HepG2 (cell line): ENCODE measurements at regions of chr6 and their contacts with region 1.

Region 1: GRCh38 chr6:27312146-27312949 is at the start of gene POM121L2:
- DNase-seq: peak; percentile 71
- ATAC-seq: peak; percentile 87
- H3K4me3 ChIP-seq: peak within 1 kb of the TSS; percentile 34 to 70 (median 60); a peak in 5 of 6 replicates
- H3K27ac ChIP-seq: no peak within 1 kb of the TSS
- H3K4me1 ChIP-seq: peaks cover 12% of the 10 kb centered on the region
- H3K27me3 ChIP-seq: peaks cover 2 to 22% of the 10 kb centered on the region in 2 experiments; a peak in 2 of 5 replicates
- CTCF ChIP-seq: peak; percentile 97
- EP300 ChIP-seq: no peak
- POLR2A ChIP-seq: no peak
- RAD21 ChIP-seq: peak; percentile 89
- total RNA-seq, gene POM121L2: not detected in 2 replicates

Region 2: DNA sequence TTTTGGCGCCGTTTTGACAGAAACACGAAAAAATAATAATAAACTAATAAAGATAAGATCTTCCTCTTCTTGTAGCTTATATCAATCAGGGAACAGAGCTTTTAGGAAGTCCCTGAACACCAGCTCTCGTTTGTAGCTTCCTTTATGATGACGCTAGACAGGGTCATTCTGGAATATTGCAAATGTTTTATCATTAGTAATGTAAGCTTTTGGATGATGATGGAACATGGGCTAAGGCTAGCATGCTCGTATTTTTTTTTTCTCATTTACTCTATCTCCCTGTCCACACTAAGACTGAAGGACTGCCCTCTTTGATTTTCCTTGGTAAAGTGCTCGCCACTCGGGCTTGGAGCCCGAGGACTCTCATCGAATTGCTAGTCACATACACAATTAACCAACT is 21.8 kb after region 1 on chr6:
- CTCF ChIA-PET with region 1: no interaction called
- POLR2A ChIA-PET with region 1: no interaction called
- in situ Hi-C with region 1: no loop called
- intact Hi-C with region 1: no loop called
- DNase-seq: no peak
- ATAC-seq: no peak
- H3K4me3 ChIP-seq: peak overlapping the region; percentile 65 to 78 (median 77); a peak in 5 of 6 replicates
- H3K27ac ChIP-seq: no peak overlapping the region
- H3K4me1 ChIP-seq: peaks cover 47% of the 10 kb centered on the region
- H3K27me3 ChIP-seq: 0 out of 5 replicates have a peak, but pooled peaks cover 0 to 5% of the 10 kb centered on the region in 2 experiments
- CTCF ChIP-seq: no peak
- EP300 ChIP-seq: no peak
- POLR2A ChIP-seq: no peak
- RAD21 ChIP-seq: no peak

Region 3: DNA sequence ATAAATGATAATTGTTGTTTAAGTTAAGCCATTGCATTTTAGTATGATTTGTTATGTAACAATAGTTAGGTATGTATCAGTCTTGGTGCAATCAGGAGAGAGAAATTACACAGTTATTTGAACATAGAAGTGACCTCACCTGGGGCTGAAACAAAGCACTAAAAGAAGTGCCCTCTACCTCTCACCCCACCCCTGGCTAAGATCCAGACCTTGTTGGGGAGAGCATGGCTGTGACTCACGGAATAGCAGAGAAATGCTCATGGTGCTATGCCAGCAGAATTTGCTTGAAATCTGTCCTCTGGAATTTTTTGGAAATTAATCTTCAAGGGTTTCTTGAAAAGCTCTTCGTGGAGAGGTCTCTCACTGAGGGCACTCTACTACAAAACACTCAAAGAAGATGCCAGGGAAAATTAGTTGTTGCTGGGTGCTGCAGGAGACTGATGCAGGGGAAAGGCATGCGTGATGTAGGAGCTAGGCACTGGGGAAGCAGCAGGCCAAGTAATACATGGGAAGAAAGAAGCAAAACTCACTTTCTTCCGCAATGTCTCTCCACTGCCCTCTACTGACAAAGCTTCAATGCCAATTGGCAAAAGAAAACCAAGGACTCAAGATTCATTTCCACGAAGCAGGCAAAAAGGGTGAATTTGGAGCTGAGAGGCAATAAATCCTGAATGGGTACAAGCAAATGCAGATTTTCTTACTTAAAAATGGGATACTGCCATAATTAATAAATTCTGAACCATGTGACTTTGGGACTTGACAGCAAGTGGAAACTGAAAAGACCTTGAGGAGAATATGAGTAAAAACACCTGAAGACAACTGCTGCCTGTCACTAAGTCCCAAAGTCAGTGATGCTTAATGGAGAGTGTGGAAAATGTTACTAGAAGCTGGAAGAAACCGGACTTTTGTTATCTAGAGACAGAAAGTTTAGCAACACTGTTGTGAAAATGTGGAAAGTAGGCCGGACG is 296.9 kb after region 1 on chr6:
- CTCF ChIA-PET with region 1: interaction called, 5 read pairs
- POLR2A ChIA-PET with region 1: no interaction called
- in situ Hi-C with region 1: no loop called
- intact Hi-C with region 1: loop called (anchors 1 kb)
- DNase-seq: peak; percentile 61
- ATAC-seq: peak; percentile 31; the same call in 2 of the 3 replicates
- H3K4me3 ChIP-seq: no peak overlapping the region
- H3K27ac ChIP-seq: no peak overlapping the region
- H3K4me1 ChIP-seq: peaks cover 31% of the 10 kb centered on the region
- H3K27me3 ChIP-seq: no peaks in the 10 kb centered on the region
- CTCF ChIP-seq: peak; percentile 85
- EP300 ChIP-seq: no peak
- POLR2A ChIP-seq: no peak
- RAD21 ChIP-seq: peak; percentile 47; the same call in 1 of the 2 replicates